IMR-90 (cell line): ENCODE measurements at regions of chr15 and their contacts with region 1.

Region 1: DNA sequence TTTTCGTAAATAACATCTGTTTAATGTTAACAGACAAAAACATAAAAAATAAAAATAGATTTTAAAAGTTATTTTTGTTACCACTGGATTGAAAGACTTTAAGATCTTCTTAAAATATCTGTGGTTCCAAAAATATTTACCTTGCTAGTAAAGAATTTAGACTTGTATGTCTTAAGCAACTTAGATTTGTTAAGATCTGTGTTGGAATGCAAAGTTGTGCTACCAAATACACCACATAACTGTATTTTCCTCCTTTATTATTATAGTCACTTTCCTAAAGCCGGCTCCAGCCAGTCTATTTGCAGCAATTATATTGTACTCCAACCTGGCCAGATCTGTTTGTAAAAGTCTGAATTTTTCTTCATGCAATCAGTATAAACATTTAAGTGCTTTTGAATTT is 63.7 kb downstream of the SPRED1 start:
- DNase-seq: peak; percentile 8
- ATAC-seq: no peak
- H3K4me3 ChIP-seq: no peak overlapping the region
- H3K27ac ChIP-seq: no peak overlapping the region
- H3K4me1 ChIP-seq: peaks cover 2% of the 10 kb centered on the region; the same call in 1 of the 2 replicates
- H3K27me3 ChIP-seq: no peaks in the 10 kb centered on the region
- CTCF ChIP-seq: no peak
- POLR2A ChIP-seq: no peak
- RAD21 ChIP-seq: no peak

Region 2: GRCh38 chr15:38266247-38266986 is 49.9 kb before region 1 on chr15:
- CTCF ChIA-PET with region 1: no interaction called
- POLR2A ChIA-PET with region 1: no interaction called
- dilution Hi-C with region 1: no loop called
- in situ Hi-C with region 1: no loop called
- intact Hi-C with region 1: loop called (anchors 5 kb)
- DNase-seq: no peak
- ATAC-seq: peak; percentile 38
- H3K4me3 ChIP-seq: no peak overlapping the region
- H3K27ac ChIP-seq: 0 out of 2 replicates have a peak overlapping the region, but pooled peaks have one; percentile 22
- H3K4me1 ChIP-seq: peaks cover 15% of the 10 kb centered on the region; the same call in 1 of the 2 replicates
- H3K27me3 ChIP-seq: no peaks in the 10 kb centered on the region
- CTCF ChIP-seq: no peak
- POLR2A ChIP-seq: no peak
- RAD21 ChIP-seq: no peak